ENCODE measurements at regions of chr2 and their contacts with region 1.

Region 1: DNA sequence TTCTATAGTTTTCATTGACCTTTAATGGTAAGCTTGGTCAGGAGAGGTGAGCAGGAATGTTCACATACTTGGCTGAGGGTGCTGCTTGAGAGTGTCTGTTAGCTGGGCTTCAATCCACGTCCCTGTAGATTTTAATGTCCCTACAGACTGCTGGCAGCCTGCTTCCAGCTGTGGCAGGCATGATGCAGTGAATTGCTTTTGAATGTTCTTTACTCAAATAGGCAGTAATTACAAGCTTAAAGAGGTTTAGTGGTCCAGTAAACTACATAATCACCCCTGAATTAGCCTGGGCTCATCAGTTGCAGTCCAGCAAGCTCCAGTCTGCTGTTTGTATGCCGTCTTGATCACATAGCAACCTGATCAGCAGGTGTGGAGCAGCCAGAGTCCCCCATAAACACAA is 102.1 kb downstream of the MEIS1 start:
- DNase-seq: no peak
- H3K4me3 ChIP-seq: no peak overlapping the region
- H3K27ac ChIP-seq: no peak overlapping the region
- H3K4me1 ChIP-seq: peaks cover 0 to 5% of the 10 kb centered on the region in 2 donors
- H3K27me3 ChIP-seq: no peaks in the 10 kb centered on the region
- CTCF ChIP-seq: no peak
- POLR2A ChIP-seq: no peak

Region 2: GRCh38 chr2:65678779-65679391 is 858.1 kb before region 1 on chr2:
- intact Hi-C with region 1: loop called (anchors 5 kb)
- DNase-seq: no peak
- H3K4me3 ChIP-seq: no peak overlapping the region
- H3K27ac ChIP-seq: no peak overlapping the region
- H3K4me1 ChIP-seq: no peaks in the 10 kb centered on the region
- H3K27me3 ChIP-seq: no peaks in the 10 kb centered on the region
- CTCF ChIP-seq: no peak
- POLR2A ChIP-seq: no peak

Region 3: GRCh38 chr2:65818873-65819451 is 718.0 kb before region 1 on chr2:
- intact Hi-C with region 1: no loop called
- DNase-seq: no peak
- H3K4me3 ChIP-seq: no peak overlapping the region
- H3K27ac ChIP-seq: no peak overlapping the region
- H3K4me1 ChIP-seq: no peaks in the 10 kb centered on the region
- H3K27me3 ChIP-seq: no peaks in the 10 kb centered on the region
- CTCF ChIP-seq: no peak
- POLR2A ChIP-seq: no peak

Region 4: DNA sequence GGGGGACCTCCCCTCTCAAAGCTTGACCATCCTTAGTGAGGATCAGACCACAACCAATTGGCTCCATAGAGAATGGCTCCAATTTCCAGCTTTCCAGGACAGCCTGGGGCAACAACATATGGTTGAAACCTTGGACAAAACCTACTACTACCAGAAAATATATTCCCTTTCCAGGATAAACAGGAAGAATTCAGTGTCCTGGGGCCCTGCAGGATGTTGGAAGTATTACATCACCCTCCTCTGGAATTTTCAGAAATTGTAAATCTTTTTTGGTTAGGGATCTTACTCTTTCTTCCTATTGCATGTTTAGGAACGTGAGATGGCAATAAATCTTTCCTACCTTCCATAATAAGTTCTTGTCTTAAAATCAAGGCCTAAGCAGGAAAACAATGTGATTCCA is 261.0 kb before region 1 on chr2:
- intact Hi-C with region 1: no loop called
- DNase-seq: no peak
- H3K4me3 ChIP-seq: no peak overlapping the region
- H3K27ac ChIP-seq: no peak overlapping the region
- H3K4me1 ChIP-seq: no peaks in the 10 kb centered on the region
- H3K27me3 ChIP-seq: no peaks in the 10 kb centered on the region
- CTCF ChIP-seq: no peak
- POLR2A ChIP-seq: no peak

Region 5: DNA sequence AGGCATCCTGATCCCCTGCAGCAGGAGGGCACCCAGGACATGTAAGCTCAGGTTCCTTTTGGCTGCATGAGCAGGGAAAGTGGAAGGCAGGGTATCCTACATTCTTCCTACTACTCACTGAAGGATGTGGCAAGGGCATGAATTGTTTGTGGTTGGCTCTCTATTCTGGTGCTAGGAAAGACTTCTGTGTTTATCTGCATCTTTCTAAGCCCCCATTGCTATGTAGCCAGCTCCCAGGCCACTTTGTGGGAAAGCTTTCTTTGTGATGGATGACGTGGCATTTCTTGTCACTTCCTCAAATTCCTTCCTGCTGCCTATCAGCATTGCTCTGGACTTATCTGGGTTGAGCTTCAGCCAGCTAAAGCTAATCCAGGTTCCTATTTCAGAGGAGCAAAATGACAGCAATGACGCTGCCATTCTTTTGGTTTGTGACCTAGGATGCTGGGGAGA is 55.9 kb before region 1 on chr2:
- intact Hi-C with region 1: no loop called
- DNase-seq: no peak
- H3K4me3 ChIP-seq: no peak overlapping the region
- H3K27ac ChIP-seq: no peak overlapping the region
- H3K4me1 ChIP-seq: no peaks in the 10 kb centered on the region
- H3K27me3 ChIP-seq: no peaks in the 10 kb centered on the region
- CTCF ChIP-seq: no peak
- POLR2A ChIP-seq: no peak

Region 6: DNA sequence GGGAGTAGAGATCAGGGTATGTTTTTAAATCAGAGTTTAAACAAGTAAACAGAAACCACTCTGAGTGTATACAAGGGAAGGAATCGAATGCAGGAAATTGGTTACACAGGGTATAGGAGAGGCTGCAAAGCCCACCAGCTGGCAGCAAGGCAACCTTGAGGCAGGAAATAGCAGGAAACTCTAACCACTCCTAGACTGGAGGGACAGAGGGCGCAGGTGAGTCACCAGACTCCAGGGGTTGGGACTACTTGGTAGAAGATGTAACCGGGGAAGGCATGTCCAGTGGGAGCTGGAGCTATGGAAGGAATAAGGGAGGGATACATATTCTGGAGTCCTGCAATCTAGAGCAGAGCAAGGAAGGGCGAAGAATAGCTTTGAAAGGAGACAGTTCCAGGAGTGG is 50.2 kb after region 1 on chr2:
- intact Hi-C with region 1: no loop called
- DNase-seq: no peak
- H3K4me3 ChIP-seq: no peak overlapping the region
- H3K27ac ChIP-seq: no peak overlapping the region
- H3K4me1 ChIP-seq: no peaks in the 10 kb centered on the region
- H3K27me3 ChIP-seq: peaks cover 0 to 15% of the 10 kb centered on the region in 2 donors
- CTCF ChIP-seq: no peak
- POLR2A ChIP-seq: no peak

Measured in breast epithelium (tissue), 4 donors.